Activated naive CD4-positive, alpha-beta T cell treated with anti-CD3 and anti-CD28 coated beads for 36 hours (primary cell): ENCODE measurements at regions of chr3 and their contacts with region 1.

Region 1: GRCh38 chr3:143972505-143973255 is 1.1 kb downstream of the DIPK2A start:
- DNase-seq: peak; percentile 54
- H3K4me3 Mint-ChIP-seq: peak overlapping the region; percentile 94
- H3K27ac Mint-ChIP-seq: peak overlapping the region; percentile 92
- H3K4me1 Mint-ChIP-seq: peaks cover 24% of the 10 kb centered on the region
- H3K27me3 Mint-ChIP-seq: peaks cover 3% of the 10 kb centered on the region

Region 2: GRCh38 chr3:142578327-142579223 is 1394.1 kb before region 1 on chr3 and contains the start of gene ATR:
- CTCF ChIA-PET with region 1: no interaction called
- intact Hi-C with region 1: loop called (anchors 1 kb)
- DNase-seq: peak; percentile 98
- H3K4me3 Mint-ChIP-seq: peak within 1 kb of the TSS; percentile 94
- H3K27ac Mint-ChIP-seq: peak within 1 kb of the TSS; percentile 95
- H3K4me1 Mint-ChIP-seq: peaks cover 41% of the 10 kb centered on the region
- H3K27me3 Mint-ChIP-seq: no peaks in the 10 kb centered on the region
- total RNA-seq, gene ATR: 42.5 to 43.1 TPM

Region 3: DNA sequence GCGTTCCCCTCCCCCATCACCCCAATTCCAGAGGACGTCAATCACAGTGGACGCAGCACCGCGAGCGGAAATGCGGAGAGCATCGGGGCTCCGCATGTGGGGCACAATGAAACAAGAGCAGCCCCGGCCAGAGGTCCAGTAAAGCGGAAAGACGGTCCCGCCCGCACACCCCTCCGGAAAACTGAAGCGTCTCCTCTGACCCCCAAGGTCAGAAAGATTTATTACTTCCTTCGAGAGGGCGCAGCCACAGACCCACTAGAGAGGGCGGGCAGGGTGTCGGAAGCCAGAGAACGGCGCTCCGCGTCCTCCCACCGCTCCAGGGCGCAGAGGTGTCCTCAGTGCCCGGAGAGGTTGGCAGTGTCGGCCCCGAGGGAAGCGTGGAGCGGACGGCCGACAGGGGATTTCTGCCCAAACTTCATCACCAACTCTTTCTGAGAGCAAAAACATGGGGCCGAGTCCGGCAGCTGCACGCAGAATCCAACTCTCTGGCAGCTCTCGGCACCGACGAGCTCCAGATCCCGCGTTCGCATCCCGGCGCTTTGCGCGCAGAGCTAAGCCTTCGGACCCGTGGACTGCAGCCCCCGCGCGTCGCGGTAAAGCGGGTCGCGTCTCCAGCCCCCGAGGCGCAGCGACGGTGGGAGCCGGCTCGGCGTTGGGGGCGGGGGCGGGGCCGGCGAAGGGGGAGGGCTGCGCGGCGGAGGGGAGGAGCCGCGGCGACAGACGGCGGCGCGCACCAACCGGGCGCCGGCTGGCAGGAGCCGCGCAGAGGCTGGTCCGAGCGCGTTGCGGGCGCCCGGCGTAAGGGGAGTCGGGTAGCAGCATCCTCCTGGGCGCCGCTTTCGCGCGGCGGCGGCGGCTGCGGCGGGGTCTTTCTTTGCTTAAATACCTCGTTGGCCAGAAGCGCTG is 853.4 kb before region 1 on chr3 and contains the start of gene CHST2:
- CTCF ChIA-PET with region 1: no interaction called
- intact Hi-C with region 1: loop called (anchors 1 kb)
- DNase-seq: peak; percentile 76
- H3K4me3 Mint-ChIP-seq: peak within 1 kb of the TSS; percentile 84
- H3K27ac Mint-ChIP-seq: no peak within 1 kb of the TSS
- H3K4me1 Mint-ChIP-seq: peaks cover 31% of the 10 kb centered on the region
- H3K27me3 Mint-ChIP-seq: no peaks in the 10 kb centered on the region
- total RNA-seq, gene CHST2: 4.2 to 4.4 TPM

Region 4: GRCh38 chr3:143775459-143775858 is 197.2 kb before region 1 on chr3:
- CTCF ChIA-PET with region 1: interaction called, 6 read pairs
- intact Hi-C with region 1: loop called (anchors 1 kb)
- DNase-seq: peak; percentile 25
- H3K4me3 Mint-ChIP-seq: no peak overlapping the region
- H3K27ac Mint-ChIP-seq: no peak overlapping the region
- H3K4me1 Mint-ChIP-seq: peaks cover 3% of the 10 kb centered on the region
- H3K27me3 Mint-ChIP-seq: no peaks in the 10 kb centered on the region

Region 5: DNA sequence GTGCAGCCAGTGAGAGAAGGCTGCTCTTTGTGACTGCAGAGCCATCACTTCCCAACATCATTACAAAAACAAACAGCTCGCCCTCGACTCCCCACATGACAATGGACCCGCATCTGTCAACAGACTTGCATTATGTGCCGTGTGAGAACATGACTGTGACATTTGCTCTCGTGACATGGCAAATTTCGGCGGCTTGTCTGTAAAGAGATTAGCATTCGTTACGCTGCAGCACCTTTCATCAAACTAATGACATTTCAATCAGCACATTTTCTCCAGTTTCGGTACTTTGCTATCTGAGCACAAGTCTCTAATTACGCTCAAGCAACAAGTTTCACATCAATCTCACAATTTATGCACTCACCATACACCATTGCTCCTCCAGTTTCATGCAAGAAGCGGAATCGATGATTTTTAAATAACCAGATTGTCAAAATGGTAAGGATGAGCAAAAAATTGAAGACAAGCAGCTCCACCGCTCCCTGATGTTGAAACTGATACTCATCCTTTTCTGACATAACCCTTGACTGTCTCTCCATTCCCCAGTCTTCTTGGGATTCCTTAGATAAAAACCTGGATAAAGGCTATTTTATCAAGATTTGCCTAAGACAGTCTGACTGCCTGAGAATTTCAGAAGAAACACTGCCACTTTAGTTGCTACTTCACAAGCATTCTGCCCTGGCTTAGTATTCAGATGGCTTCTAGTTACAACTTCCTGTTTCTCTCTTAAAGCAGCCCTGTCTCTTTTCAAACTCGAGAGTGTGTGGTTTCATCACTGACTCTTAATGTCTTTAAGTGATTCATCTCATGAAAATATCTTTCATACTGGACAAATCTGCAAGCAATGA is 124.7 kb before region 1 on chr3 and contains the start of gene SLC9A9:
- CTCF ChIA-PET with region 1: no interaction called
- intact Hi-C with region 1: loop called (anchors 1 kb)
- DNase-seq: peak; percentile 61
- H3K4me3 Mint-ChIP-seq: peak within 1 kb of the TSS; percentile 87
- H3K27ac Mint-ChIP-seq: peak within 1 kb of the TSS; percentile 80
- H3K4me1 Mint-ChIP-seq: peaks cover 49% of the 10 kb centered on the region
- H3K27me3 Mint-ChIP-seq: no peaks in the 10 kb centered on the region
- total RNA-seq, gene SLC9A9: 0.33 to 0.49 TPM

Region 6: GRCh38 chr3:144308396-144308795 is 335.7 kb after region 1 on chr3:
- CTCF ChIA-PET with region 1: no interaction called
- intact Hi-C with region 1: loop called (anchors 10 kb)
- DNase-seq: no peak
- H3K4me3 Mint-ChIP-seq: no peak overlapping the region
- H3K27ac Mint-ChIP-seq: no peak overlapping the region
- H3K4me1 Mint-ChIP-seq: no peaks in the 10 kb centered on the region
- H3K27me3 Mint-ChIP-seq: peaks cover 8% of the 10 kb centered on the region

Region 7: DNA sequence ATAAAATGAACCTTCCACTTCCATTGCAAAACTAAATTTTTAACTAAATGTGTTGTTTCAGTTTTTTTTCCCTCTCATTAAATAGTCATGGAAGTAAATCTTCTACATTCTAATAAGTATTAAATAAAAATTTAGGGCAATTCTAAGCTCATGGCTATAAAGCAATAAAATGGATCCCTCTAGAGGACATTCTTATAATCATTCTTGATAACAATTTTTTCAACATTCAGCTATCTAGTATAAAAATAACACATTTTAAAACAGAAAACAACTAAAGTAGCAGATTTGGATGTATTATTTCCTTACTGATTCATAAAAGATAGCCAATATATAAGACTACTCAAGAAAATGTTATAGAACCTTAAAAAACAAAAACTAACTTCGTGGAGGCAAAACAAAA is 1795.2 kb after region 1 on chr3:
- CTCF ChIA-PET with region 1: no interaction called
- intact Hi-C with region 1: loop called (anchors 5 kb)
- DNase-seq: no peak
- H3K4me3 Mint-ChIP-seq: no peak overlapping the region
- H3K27ac Mint-ChIP-seq: no peak overlapping the region
- H3K4me1 Mint-ChIP-seq: no peaks in the 10 kb centered on the region
- H3K27me3 Mint-ChIP-seq: no peaks in the 10 kb centered on the region